Activated CD4-positive, alpha-beta T cell treated with anti-CD3 and anti-CD28 coated beads, Interleukin-2, amount 10 ng/mL, durations not matched to agents 7 days and 5 days (primary cell): ENCODE measurements at regions of chr21 and their contacts with region 1.

Region 1: DNA sequence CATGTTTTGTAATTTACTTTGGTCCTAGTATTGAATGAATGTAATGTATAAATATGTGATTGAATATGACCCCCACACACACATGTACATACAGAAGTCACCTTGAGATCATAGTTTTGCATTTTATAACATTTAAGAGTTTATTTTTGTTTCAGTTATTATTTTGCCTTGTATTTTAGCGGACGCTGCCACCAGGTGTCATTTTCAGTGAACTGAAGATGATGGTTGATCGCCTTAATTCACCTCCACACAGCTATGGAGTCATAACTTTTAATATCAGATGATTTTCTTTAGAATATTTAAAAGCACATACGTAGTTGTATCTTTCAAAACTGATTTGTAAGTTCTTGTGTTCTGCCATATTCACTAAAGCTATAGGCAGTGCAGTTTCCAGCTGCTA is 130.4 kb downstream of the DYRK1A start:
- DNase-seq: no peak
- H3K4me3 Mint-ChIP-seq: no peak overlapping the region
- H3K27ac Mint-ChIP-seq: no peak overlapping the region
- H3K4me1 Mint-ChIP-seq: peaks cover 3% of the 10 kb centered on the region
- H3K27me3 Mint-ChIP-seq: no peaks in the 10 kb centered on the region

Region 2: DNA sequence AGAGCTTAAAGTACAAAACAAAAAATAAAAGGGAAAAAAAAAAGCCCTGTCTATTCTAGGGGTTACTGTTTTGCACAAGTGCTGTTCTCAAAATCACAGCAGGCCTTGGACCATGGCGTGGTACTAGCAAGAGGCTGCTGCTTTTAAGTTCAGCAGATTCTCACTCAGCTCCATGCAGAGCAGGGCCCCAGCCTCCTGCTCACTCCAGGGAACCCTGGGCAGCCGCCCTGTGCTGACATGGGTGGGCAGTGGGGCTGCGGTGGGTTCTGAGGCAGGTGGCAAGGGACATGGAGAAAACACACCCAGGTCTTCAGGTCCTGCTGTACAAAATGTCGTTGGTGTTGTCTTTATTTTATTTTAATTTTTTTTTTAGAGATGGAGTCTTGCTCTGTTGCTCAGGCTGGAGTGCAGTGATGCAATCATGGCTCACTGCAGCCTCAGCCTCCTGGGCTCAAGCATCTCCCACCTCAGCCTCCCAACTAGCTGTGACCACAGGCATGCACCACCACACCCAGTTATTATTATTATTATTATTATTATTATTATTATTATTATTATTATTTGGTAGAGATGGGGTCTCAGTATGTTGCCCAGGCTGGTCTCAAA is 40.5 kb after region 1 on chr21:
- CTCF ChIA-PET with region 1: no interaction called
- POLR2A ChIA-PET with region 1: interaction called, 12 read pairs
- DNase-seq: no peak
- H3K4me3 Mint-ChIP-seq: no peak overlapping the region
- H3K27ac Mint-ChIP-seq: no peak overlapping the region
- H3K4me1 Mint-ChIP-seq: no peaks in the 10 kb centered on the region
- H3K27me3 Mint-ChIP-seq: peaks cover 24% of the 10 kb centered on the region